ENCODE measurements at regions of chr4 and their contacts with region 1.

Region 1: GRCh38 chr4:139301113-139301820 is at the start of gene NAA15:
- DNase-seq: peak; percentile 97
- H3K4me3 ChIP-seq: peak within 1 kb of the TSS; percentile 91 to 97
- H3K27ac ChIP-seq: peak within 1 kb of the TSS; percentile 90 to 94
- H3K4me1 ChIP-seq: peaks cover 15 to 19% of the 10 kb centered on the region in 2 experiments; a peak in 3 of 4 replicates
- H3K27me3 ChIP-seq: no peaks in the 10 kb centered on the region
- CTCF ChIP-seq: no peak
- EP300 ChIP-seq: peak; percentile 38 to 47; a peak in 2 of 4 replicates
- RAD21 ChIP-seq: 0 out of 2 replicates have a peak, but pooled peaks have one; percentile 8
- polyA plus RNA-seq, gene NAA15: 7.1 and 7.8 TPM in 2 replicates

Region 2: DNA sequence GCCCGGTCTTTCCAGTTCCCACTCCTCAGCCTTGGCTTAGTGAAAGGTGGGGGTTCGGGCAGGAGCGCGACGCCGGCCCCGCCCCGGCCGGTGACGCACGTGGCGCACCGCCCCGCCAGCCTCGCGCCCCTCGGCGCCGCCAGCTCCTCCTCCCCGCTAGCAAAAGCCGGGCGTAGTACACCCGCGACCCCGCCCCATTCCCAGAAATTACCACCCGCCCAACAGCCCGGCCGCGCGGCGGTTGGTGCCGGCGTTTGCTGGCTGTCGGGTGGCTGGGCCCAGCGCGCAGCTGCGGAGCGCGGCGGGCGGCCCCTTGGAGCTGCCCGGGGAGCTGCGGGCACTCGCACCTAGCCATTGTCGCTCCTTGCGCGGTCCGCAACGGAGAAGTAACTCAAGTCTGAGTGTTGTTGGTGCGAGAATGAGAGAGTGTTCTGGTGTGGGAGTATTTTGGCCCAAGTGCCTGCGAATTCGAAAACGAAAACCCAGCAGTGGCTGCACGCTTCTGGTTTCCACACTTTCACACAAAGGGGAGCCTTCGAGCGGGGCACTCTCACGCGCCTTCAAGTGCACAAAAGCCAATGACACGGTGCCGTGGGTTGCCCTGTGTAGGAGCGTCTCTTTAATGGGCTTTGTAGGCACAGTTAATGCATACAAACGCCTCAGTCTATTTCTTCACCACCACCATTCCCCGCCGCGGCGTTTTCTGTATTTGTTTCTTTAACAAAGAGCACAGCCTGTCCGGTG is 123.2 kb before region 1 on chr4:
- CTCF ChIA-PET with region 1: interaction called, 8 read pairs
- POLR2A ChIA-PET with region 1: interaction called, 19 read pairs
- DNase-seq: peak; percentile 96
- H3K4me3 ChIP-seq: peak overlapping the region; percentile 94 to 98
- H3K27ac ChIP-seq: peak overlapping the region; percentile 85 to 97
- H3K4me1 ChIP-seq: peaks cover 3 to 11% of the 10 kb centered on the region in 2 experiments; a peak in 3 of 4 replicates
- H3K27me3 ChIP-seq: no peaks in the 10 kb centered on the region
- CTCF ChIP-seq: no peak
- EP300 ChIP-seq: peak in 1 of 2 experiments; percentile 26; a peak in 1 of 4 replicates
- RAD21 ChIP-seq: no peak